ENCODE measurements at regions of chr7 and their contacts with region 1.

Region 1: DNA sequence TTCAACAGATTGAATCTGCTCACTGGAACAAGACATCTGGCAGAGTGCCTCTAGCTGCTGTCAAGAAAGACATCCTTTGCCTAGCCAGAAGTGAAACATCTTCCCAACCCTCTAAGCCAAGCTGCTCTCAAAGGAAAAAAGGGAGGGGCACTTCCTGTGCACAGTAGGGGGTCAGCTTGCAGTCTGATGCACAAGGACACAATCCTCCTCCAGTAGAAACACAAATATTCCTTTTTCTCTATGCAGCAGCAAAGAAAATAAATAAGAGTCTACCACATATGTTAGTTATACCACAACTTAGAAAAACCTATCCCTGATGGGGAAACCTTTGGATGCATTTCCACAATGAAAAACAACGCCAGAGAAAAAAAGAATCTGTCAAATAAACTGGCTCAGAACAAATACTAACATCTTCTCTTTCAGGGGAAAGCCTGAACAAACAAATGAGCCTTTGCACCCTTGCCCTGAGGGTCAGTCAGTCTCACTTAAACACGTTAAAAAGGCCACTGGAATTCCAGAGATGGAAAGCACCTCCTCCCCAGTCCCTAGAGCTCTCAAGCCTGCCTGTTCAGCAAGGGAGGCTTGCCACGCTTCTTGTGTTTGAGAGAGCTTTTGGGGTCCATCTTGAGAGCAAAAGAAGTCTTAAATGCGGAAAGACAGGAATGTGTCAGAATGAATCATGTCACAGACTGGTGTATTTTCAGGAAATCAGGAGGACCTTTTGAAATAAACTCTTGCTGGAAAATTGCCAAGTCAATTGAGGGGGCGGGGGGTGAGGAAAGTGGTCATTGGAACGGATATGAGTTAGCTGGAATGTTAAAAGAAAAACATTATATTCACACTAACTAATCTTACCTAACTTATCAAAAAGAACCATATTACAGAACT is 7.5 kb downstream of the LAMB1 start:
- DNase-seq: no peak
- H3K4me3 ChIP-seq: no peak overlapping the region
- H3K27ac ChIP-seq: peak overlapping the region in 2 of 5 donors; percentile 19 to 57
- H3K4me1 ChIP-seq: peaks cover 6 to 10% of the 10 kb centered on the region in 2 donors
- H3K27me3 ChIP-seq: no peaks in the 10 kb centered on the region
- CTCF ChIP-seq: no peak
- POLR2A ChIP-seq: no peak

Region 2: GRCh38 chr7:108078211-108078673 is 82.8 kb after region 1 on chr7:
- intact Hi-C with region 1: no loop called
- DNase-seq: no peak
- H3K4me3 ChIP-seq: no peak overlapping the region
- H3K27ac ChIP-seq: no peak overlapping the region
- H3K4me1 ChIP-seq: no peaks in the 10 kb centered on the region
- H3K27me3 ChIP-seq: no peaks in the 10 kb centered on the region
- CTCF ChIP-seq: no peak
- POLR2A ChIP-seq: no peak

Region 3: DNA sequence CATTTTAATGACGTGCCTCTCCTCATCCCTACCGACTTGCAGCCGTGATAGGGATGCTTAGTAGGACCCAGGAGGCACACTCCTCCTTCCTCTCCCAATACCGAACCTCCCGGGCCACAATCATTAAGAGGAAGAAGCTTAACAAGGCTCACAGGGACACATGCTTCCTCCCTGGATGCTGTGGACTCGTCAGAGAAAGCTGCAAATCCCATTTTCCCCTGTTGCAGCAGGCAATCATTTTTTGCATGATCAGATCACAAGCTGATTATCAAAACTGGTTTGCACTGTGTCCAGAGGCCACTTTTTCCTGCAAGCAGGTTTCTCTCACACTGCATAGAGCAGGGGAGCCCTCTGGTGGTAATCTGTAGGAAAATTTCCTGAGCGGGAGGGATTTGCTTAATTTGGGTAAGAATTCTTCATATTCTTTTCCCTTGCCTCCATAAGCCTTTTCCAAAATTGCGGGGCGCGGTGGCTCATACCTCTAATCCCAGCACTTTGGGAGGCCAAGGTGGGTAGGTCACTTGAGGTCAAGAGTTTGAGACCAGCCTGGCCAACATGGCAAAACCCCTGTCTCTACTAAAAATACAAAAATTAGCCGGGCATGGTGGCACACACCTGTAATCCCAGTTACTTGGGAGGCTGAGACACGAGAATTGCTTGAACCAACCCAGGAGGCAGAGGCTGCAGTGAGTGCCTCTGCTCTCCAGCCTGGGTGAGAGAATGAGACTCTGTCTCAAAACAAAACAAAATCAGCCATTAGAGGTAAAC is 150.8 kb after region 1 on chr7:
- intact Hi-C with region 1: loop called in 1 of 2 experiments (anchors 10 kb)
- DNase-seq: peak; percentile 49 to 79 (median 60)
- H3K4me3 ChIP-seq: no peak overlapping the region
- H3K27ac ChIP-seq: no peak overlapping the region
- H3K4me1 ChIP-seq: no peaks in the 10 kb centered on the region
- H3K27me3 ChIP-seq: no peaks in the 10 kb centered on the region
- CTCF ChIP-seq: peak; percentile 68 to 89 (median 80)
- POLR2A ChIP-seq: no peak